Endothelial cell of umbilical vein (primary cell): ENCODE measurements at regions of chr5 and their contacts with region 1.

Region 1: DNA sequence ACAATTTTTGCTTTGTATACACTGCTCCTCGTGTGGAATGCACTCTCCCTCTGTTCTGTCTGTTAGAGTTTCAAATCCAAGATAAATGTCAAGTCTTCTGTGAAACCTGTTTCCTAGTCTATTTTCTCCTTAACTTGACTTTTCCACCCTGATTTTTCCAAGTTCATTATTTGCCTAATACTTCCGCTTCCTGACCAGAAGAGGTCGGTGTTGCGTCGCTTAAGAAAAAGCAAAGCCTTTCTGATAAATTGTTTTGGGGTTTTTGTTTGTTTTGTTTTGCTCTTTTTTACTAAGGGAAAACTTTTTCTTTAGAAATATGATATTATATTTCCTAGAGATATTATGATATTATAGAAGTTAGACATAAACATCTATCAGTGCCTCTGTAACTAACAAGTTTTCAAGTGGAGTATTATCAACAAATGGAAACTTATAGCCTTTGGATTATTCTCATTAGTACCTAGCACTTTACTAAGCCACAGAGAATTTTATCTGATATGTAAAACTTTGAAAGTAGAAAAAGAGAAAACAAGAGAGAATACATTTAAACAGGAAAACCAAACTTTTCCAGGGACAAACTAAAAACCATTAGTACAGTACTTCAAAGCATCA is 55.8 kb downstream of the PHAX start:
- DNase-seq: peak; percentile 47
- H3K4me3 ChIP-seq: no peak overlapping the region
- H3K27ac ChIP-seq: no peak overlapping the region
- H3K4me1 ChIP-seq: no peaks in the 10 kb centered on the region
- H3K27me3 ChIP-seq: no peaks in the 10 kb centered on the region
- CTCF ChIP-seq: peak; percentile 61 to 62
- POLR2A ChIP-seq: no peak

Region 2: GRCh38 chr5:126736141-126736540 is 79.6 kb after region 1 on chr5:
- CTCF ChIA-PET with region 1: no interaction called
- POLR2A ChIA-PET with region 1: no interaction called
- dilution Hi-C with region 1: no loop called
- intact Hi-C with region 1: no loop called
- DNase-seq: no peak
- H3K4me3 ChIP-seq: no peak overlapping the region
- H3K27ac ChIP-seq: no peak overlapping the region
- H3K4me1 ChIP-seq: no peaks in the 10 kb centered on the region
- H3K27me3 ChIP-seq: no peaks in the 10 kb centered on the region
- CTCF ChIP-seq: no peak
- POLR2A ChIP-seq: no peak

Region 3: DNA sequence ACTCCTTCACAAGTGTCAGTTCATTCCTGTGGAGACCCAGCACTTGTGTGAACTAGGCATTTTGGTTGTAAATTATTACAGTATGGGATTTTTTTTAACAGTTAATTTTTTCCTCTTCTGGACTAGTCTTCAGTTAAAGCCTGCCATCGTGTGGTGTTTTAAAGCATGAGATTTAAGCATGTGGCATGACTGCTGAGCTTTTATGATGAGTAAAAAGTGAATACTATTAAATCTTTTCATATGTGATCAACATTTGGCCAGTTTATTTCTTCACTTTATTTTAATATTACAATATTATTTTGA is 145.4 kb after region 1 on chr5:
- CTCF ChIA-PET with region 1: interaction called, 27 read pairs
- POLR2A ChIA-PET with region 1: no interaction called
- dilution Hi-C with region 1: no loop called
- intact Hi-C with region 1: loop called (anchors 5 kb)
- DNase-seq: peak; percentile 46
- H3K4me3 ChIP-seq: no peak overlapping the region
- H3K27ac ChIP-seq: no peak overlapping the region
- H3K4me1 ChIP-seq: peaks cover 6% of the 10 kb centered on the region
- H3K27me3 ChIP-seq: no peaks in the 10 kb centered on the region
- CTCF ChIP-seq: no peak
- POLR2A ChIP-seq: no peak

Region 4: GRCh38 chr5:126808521-126808988 is 152.1 kb after region 1 on chr5:
- CTCF ChIA-PET with region 1: interaction called, 7 read pairs
- POLR2A ChIA-PET with region 1: no interaction called
- dilution Hi-C with region 1: no loop called
- intact Hi-C with region 1: loop called (anchors 5 kb)
- DNase-seq: peak; percentile 53
- H3K4me3 ChIP-seq: no peak overlapping the region
- H3K27ac ChIP-seq: no peak overlapping the region
- H3K4me1 ChIP-seq: peaks cover 39% of the 10 kb centered on the region
- H3K27me3 ChIP-seq: no peaks in the 10 kb centered on the region
- CTCF ChIP-seq: peak; percentile 13 to 40
- POLR2A ChIP-seq: no peak